HepG2 (cell line): ENCODE measurements at regions of chr9 and their contacts with region 1.

Region 1: GRCh38 chr9:27033823-27034403 is 28.4 kb upstream of the LRRC19 start:
- DNase-seq: peak; percentile 30
- ATAC-seq: peak; percentile 79
- H3K4me3 ChIP-seq: no peak overlapping the region
- H3K27ac ChIP-seq: no peak overlapping the region
- H3K4me1 ChIP-seq: no peaks in the 10 kb centered on the region
- H3K27me3 ChIP-seq: no peaks in the 10 kb centered on the region
- CTCF ChIP-seq: peak; percentile 70
- EP300 ChIP-seq: no peak
- POLR2A ChIP-seq: no peak
- RAD21 ChIP-seq: peak; percentile 39; the same call in 1 of the 2 replicates

Region 2: DNA sequence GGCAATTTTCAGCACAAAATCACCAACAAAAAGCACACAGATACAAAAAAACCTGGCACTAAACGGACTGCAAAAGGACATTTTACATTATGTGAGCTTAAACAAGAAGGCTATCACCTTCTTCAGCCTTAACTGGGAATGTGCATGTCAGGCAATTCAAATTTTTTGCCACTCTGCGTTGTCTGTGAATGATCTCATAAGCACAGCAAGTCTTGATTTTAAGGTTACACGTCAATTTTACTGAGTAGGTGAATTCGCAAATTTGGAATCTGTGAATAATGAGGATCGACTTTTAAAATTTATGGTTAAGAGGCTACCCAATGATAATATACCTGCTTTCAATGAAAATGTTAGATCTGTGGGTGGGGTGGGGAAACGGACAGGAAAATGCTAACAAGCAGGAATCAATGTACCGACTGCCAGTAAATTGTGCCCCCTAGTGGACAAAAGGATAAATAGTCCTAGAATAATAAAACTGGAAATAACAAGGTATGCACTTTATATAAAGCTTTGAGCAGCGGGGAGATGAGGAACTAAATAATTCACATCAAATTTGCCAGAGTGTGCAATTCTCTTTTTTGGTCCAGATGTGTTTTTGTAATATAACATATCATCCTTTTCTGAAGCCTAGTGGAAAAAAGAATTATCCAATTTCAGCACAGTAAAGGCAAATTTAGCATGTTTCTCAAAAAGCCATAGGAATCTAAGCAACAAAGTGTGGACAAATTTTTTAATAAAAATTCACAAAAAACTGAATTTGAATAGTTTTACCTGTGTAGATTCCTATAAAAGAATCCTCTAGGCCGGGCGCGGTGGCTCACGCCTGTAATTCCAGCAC is 242.5 kb after region 1 on chr9:
- CTCF ChIA-PET with region 1: interaction called, 18 read pairs
- POLR2A ChIA-PET with region 1: no interaction called
- in situ Hi-C with region 1: loop called (anchors 5 kb)
- intact Hi-C with region 1: loop called (anchors 1 kb)
- DNase-seq: peak; percentile 45
- ATAC-seq: peak; percentile 74
- H3K4me3 ChIP-seq: no peak overlapping the region
- H3K27ac ChIP-seq: no peak overlapping the region
- H3K4me1 ChIP-seq: peaks cover 5% of the 10 kb centered on the region; the same call in 1 of the 2 replicates
- H3K27me3 ChIP-seq: peaks cover 1 to 10% of the 10 kb centered on the region in 2 experiments; a peak in 2 of 5 replicates
- CTCF ChIP-seq: peak; percentile 73
- EP300 ChIP-seq: no peak
- POLR2A ChIP-seq: no peak
- RAD21 ChIP-seq: no peak